ENCODE measurements at regions of chr12 and their contacts with region 1.

Region 1: DNA sequence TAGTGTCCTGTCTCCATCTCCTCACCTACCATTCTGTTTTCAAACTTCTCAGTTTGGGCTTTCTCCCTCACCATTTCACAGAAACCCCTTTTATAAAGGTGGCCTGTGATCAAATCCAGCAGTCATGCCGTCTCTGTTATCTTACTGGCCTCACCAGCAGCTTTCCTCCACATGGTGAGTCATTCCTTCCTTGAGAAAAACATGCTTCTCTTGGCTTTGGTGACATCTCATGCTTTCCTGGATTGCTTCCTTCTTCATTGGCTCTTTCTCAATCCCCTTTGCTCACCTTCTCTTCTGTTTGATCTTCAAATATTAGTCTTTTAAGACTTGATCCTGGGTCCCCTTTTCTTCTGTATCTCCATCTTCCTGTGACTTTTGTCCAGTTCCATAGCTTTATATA is 164.9 kb downstream of the ANO4 start:
- DNase-seq: no peak
- ATAC-seq: no peak
- H3K4me3 Mint-ChIP-seq: no peak overlapping the region
- H3K27ac Mint-ChIP-seq: no peak overlapping the region
- H3K4me1 Mint-ChIP-seq: no peaks in the 10 kb centered on the region
- H3K27me3 Mint-ChIP-seq: no peaks in the 10 kb centered on the region

Region 2: DNA sequence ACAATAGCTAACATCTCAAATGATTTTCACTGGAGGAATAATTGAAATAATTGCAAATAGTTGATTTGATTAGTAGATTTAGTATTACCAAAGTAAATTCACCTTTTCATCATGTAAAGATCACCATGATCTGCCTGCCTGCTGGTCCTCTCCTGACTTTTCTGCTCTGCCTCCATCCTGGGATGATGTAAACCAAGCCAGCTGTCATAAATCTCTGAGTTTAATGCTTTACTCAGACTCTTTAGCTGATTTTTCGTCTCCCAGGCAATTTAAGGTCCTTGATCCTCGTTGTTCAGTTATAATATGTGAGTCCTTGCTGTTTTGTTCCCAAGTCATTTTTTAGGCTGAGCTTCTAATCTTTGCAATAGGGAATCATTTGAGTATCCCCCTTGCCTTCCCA is 26.9 kb before region 1 on chr12:
- CTCF ChIA-PET with region 1: no interaction called
- POLR2A ChIA-PET with region 1: no interaction called
- intact Hi-C with region 1: no loop called
- DNase-seq: no peak
- ATAC-seq: no peak
- H3K4me3 Mint-ChIP-seq: no peak overlapping the region
- H3K27ac Mint-ChIP-seq: no peak overlapping the region
- H3K4me1 Mint-ChIP-seq: no peaks in the 10 kb centered on the region
- H3K27me3 Mint-ChIP-seq: peaks cover 1% of the 10 kb centered on the region

Region 3: GRCh38 chr12:100942984-100943749 is 16.3 kb before region 1 on chr12:
- CTCF ChIA-PET with region 1: no interaction called
- POLR2A ChIA-PET with region 1: no interaction called
- intact Hi-C with region 1: loop called in 1 of 2 experiments (anchors 1 kb)
- DNase-seq: no peak
- ATAC-seq: no peak
- H3K4me3 Mint-ChIP-seq: no peak overlapping the region
- H3K27ac Mint-ChIP-seq: no peak overlapping the region
- H3K4me1 Mint-ChIP-seq: no peaks in the 10 kb centered on the region
- H3K27me3 Mint-ChIP-seq: no peaks in the 10 kb centered on the region

Region 4: GRCh38 chr12:100995201-100995600 is 35.7 kb after region 1 on chr12:
- CTCF ChIA-PET with region 1: no interaction called
- POLR2A ChIA-PET with region 1: no interaction called
- intact Hi-C with region 1: no loop called
- DNase-seq: no peak
- ATAC-seq: no peak
- H3K4me3 Mint-ChIP-seq: no peak overlapping the region
- H3K27ac Mint-ChIP-seq: no peak overlapping the region
- H3K4me1 Mint-ChIP-seq: no peaks in the 10 kb centered on the region
- H3K27me3 Mint-ChIP-seq: no peaks in the 10 kb centered on the region

Measured in activated CD4-positive, alpha-beta T cell treated with anti-CD3 and anti-CD28 coated beads for 36 hours (primary cell).